ENCODE measurements at regions of chr10 and their contacts with region 1.

Region 1: DNA sequence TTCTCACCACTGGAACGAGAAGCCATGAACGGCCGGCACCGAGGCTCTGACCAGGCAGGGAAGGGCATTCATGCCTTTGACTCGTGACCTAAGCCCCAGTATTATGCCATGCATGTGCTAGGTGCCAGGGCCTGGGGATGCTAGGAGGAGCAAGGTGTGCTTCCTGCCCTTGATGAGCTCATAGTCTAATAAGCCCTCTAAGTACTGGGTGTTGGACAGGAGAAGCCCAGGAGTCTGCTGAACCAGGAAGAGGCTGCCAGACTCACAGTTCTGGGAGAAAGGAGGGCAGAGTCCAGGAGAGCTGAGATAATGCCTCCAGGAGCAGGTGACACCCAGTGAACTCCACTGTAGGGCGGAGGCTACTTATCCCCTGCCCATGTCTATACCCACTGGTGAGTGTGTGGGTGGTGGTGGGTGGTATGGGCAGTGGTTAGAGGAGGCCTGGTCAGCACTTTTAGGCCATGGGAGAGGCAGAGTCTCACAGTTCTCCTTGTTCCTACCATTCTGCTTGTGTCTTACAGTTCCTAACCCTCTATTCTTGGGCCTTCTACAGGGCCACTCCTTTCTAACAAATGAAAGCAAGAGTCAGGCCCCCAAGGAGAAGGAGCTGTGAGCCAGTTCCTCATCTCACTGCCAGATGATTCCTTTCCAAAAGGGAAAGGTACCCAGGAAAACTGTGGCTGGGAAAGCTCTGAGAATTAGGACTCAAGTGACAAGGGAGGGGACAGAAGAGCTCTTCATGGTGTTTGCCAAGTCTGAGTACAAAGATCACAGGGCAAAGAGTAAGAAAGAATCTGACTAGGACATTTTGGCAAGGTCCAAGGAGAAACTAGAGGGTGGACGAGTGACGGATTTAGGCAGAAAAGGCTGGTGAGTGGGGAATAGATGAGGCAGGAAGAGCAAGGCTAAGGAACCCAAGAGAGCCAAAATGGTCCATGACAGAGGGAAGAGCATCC is 3.6 kb upstream of the MXI1 start:
- DNase-seq: no peak
- ATAC-seq: no peak
- H3K4me3 ChIP-seq: no peak overlapping the region
- H3K27ac ChIP-seq: peak overlapping the region in 1 of 10 donors; percentile 22
- H3K4me1 ChIP-seq: peaks cover 0 to 16% (median 8%) of the 10 kb centered on the region in 9 donors
- H3K27me3 ChIP-seq: no peaks in the 10 kb centered on the region
- CTCF ChIP-seq: no peak

Region 2: DNA sequence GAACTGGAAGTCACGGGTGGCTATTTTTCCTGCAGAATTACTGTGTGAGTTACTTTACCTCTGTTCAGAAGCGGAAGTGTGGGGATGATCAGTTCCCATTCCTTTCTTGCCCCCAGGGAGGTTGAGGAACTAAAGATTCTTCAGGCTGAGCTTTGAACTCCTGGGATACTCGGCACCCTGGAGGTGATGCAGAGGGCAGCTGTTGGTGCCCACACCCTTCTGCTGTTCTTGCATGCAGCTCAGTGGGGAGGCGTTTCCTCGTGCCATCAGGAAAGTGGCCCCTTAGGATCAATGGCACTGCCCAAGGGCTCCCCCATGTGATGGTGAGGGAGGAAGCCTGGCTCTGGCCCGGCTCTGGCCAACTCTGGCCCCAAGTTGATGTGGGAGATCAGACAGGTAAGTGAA is 41.0 kb before region 1 on chr10:
- intact Hi-C with region 1: loop called in 1 of 10 experiments (anchors 5 kb)
- DNase-seq: no peak
- ATAC-seq: no peak
- H3K4me3 ChIP-seq: no peak overlapping the region
- H3K27ac ChIP-seq: no peak overlapping the region
- H3K4me1 ChIP-seq: peaks cover 0 to 6% (median 0%) of the 10 kb centered on the region in 9 donors
- H3K27me3 ChIP-seq: peaks cover 4 to 50% (median 11%) of the 10 kb centered on the region in 7 donors
- CTCF ChIP-seq: no peak

Region 3: GRCh38 chr10:110252151-110252550 is 48.4 kb after region 1 on chr10:
- intact Hi-C with region 1: no loop called
- DNase-seq: no peak
- ATAC-seq: no peak
- H3K4me3 ChIP-seq: no peak overlapping the region
- H3K27ac ChIP-seq: no peak overlapping the region
- H3K4me1 ChIP-seq: peaks cover 0 to 29% (median 11%) of the 10 kb centered on the region in 9 donors
- H3K27me3 ChIP-seq: no peaks in the 10 kb centered on the region
- CTCF ChIP-seq: no peak

Region 4: GRCh38 chr10:110444004-110444337 is 240.2 kb after region 1 on chr10:
- intact Hi-C with region 1: no loop called
- DNase-seq: peak; percentile 52 to 54
- ATAC-seq: peak; percentile 63 to 95 (median 78)
- H3K4me3 ChIP-seq: no peak overlapping the region
- H3K27ac ChIP-seq: peak overlapping the region in 4 of 10 donors; percentile 21 to 47 (median 32)
- H3K4me1 ChIP-seq: peaks cover 5 to 32% (median 10%) of the 10 kb centered on the region in 9 donors
- H3K27me3 ChIP-seq: no peaks in the 10 kb centered on the region
- CTCF ChIP-seq: no peak

Region 5: GRCh38 chr10:111113961-111114757 is 910.4 kb after region 1 on chr10:
- intact Hi-C with region 1: no loop called
- DNase-seq: no peak
- ATAC-seq: no peak
- H3K4me3 ChIP-seq: no peak overlapping the region
- H3K27ac ChIP-seq: no peak overlapping the region
- H3K4me1 ChIP-seq: no peaks in the 10 kb centered on the region
- H3K27me3 ChIP-seq: peaks cover 0 to 8% (median 0%) of the 10 kb centered on the region in 7 donors
- CTCF ChIP-seq: no peak

Measured in heart right ventricle (tissue), 16 donors.